Right cardiac atrium (tissue), 5 donors: ENCODE measurements at regions of chr19 and their contacts with region 1.

Region 1: DNA sequence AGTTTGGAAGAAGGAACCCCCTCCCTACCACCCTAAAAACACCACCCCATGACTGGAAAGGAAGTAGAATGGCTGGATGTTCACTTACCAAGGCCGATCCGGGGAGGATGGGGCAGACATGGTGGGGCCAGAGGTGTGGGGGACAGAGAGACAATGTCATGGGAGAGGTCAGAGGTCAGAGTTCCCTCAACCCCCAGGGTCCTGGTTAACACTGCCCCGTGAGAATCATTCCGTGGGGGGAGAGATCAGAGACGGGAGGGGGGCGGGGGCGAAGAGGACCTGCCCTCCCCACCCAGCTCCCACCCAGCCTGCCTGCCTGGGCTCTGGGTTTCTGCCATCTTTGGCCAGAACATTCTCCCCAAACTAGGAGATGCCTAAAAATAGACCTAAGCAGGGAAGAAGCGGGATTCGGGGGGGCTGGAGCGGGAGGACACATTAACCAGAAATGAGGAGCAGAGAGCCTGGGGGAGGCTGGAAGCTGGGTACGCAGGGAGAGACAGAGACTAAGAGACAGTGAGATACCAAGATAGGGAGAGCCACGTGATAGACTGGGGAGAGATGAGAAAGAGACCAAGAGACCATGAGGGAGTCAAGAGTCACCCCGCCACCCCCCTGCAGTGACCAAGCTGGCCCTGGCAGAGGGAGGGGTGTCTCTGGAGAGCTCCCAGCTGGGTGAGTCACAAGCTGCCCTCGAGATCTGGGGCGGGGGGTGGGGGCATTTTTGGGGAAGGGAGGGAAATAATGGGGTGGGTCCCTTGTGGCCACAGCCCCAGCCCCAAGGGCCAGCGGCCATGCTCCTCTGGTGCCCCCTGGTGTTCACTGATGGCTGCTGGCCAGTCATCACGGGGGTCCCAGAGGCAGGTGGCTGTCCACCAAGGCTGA is 6.1 kb upstream of the KANK2 start:
- DNase-seq: peak; percentile 87 to 93 (median 90)
- ATAC-seq: peak; percentile 73 to 78
- H3K4me3 ChIP-seq: no peak overlapping the region
- H3K27ac ChIP-seq: peak overlapping the region; percentile 94
- H3K4me1 ChIP-seq: peaks cover 5% of the 10 kb centered on the region
- H3K27me3 ChIP-seq: no peaks in the 10 kb centered on the region

Region 2: GRCh38 chr19:11035441-11036377 is 167.7 kb before region 1 on chr19:
- intact Hi-C with region 1: loop called in 3 of 4 experiments (anchors 10 kb)
- DNase-seq: peak; percentile 95 to 98 (median 96)
- ATAC-seq: peak; percentile 92 to 95
- H3K4me3 ChIP-seq: no peak overlapping the region
- H3K27ac ChIP-seq: no peak overlapping the region
- H3K4me1 ChIP-seq: no peaks in the 10 kb centered on the region
- H3K27me3 ChIP-seq: no peaks in the 10 kb centered on the region

Region 3: GRCh38 chr19:11125994-11126685 is 77.3 kb before region 1 on chr19:
- intact Hi-C with region 1: loop called in 1 of 4 experiments (anchors 5 kb)
- DNase-seq: peak; percentile 80 to 91 (median 89)
- ATAC-seq: peak; percentile 60 to 65
- H3K4me3 ChIP-seq: no peak overlapping the region
- H3K27ac ChIP-seq: peak overlapping the region; percentile 43
- H3K4me1 ChIP-seq: no peaks in the 10 kb centered on the region
- H3K27me3 ChIP-seq: no peaks in the 10 kb centered on the region

Region 4: DNA sequence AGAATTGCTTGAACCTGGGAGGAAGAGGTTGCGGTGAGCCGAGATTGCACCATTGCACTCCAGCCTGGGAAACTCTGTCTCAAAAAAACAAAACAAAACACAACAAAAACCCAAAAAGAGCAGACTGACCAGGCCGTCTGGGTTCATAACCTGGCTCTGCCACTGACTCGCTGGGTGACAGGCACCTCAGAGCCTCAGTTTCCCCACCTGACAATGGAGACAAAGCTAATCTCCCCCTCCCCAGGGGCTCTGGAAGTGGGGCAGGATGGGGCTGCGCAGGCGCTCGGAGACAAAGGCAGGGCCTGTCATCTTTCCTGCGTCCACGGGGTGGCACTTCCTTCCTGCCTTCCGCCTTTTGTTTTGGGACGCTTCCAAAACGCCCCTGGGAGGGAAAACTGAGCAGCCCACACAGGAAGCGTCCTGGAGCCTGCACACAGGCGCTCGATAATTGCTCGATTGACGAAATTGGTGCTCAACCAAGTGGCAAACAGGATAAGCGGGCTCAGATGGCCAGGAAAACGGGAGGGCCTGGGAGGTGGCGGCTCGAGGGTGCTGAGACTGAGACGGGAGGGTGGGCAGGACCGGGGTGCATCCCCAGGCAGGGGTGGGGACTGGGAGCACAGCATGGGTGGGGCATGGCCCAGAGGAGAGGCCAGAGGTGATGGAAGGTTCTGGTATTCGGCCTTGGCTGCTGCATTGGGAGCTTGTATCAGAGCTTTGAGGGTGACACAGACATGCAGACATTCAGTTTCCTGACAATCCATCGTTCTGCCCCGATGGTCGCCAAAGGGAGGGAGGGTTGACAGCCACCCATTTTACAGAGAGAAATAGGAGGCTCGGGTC is 65.7 kb before region 1 on chr19:
- intact Hi-C with region 1: loop called (anchors 2 to 5 kb)
- DNase-seq: peak; percentile 88 to 93 (median 93)
- ATAC-seq: peak; percentile 66 to 67
- H3K4me3 ChIP-seq: peak overlapping the region; percentile 12
- H3K27ac ChIP-seq: peak overlapping the region; percentile 94
- H3K4me1 ChIP-seq: peaks cover 12% of the 10 kb centered on the region
- H3K27me3 ChIP-seq: no peaks in the 10 kb centered on the region